ENCODE measurements at regions of chr1 and their contacts with region 1.

Region 1: DNA sequence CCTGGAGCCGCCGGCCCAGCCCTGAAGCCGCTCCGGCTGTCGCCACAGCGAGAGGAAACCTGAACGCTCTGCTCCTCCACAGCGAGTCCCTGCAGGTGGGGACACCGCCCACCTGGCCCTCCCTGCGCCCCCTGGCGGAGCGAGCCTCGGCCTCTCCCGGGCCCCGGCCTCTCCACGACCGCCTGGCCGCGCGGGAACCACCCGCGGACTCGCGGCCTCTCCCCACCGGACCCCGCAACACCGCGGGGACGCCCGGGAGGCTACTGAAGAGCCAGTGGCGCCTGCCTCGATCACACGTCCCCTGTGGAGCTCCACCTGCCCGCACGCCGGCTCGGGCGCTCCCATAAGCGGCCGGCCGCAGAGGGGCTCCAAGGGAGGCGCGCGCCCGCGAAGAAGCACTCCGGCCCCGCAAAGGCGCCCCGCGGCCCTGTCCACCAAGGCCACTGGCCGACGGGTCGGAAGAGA is 109.6 kb downstream of the KCNN3 start:
- DNase-seq: peak; percentile 91
- H3K4me3 ChIP-seq: peak overlapping the region; percentile 35 to 56
- H3K27ac ChIP-seq: no peak overlapping the region
- H3K4me1 ChIP-seq: no peaks in the 10 kb centered on the region; a peak in 1 of 4 replicates
- H3K27me3 ChIP-seq: peaks cover 26% of the 10 kb centered on the region
- CTCF ChIP-seq: peak; percentile 66
- EP300 ChIP-seq: no peak
- RAD21 ChIP-seq: peak; percentile 60

Region 2: GRCh38 chr1:154558575-154559465 is 201.7 kb before region 1 on chr1 and contains the start of gene UBE2Q1:
- CTCF ChIA-PET with region 1: interaction called, 17 read pairs
- POLR2A ChIA-PET with region 1: no interaction called
- DNase-seq: peak; percentile 98
- H3K4me3 ChIP-seq: peak within 1 kb of the TSS; percentile 87 to 94
- H3K27ac ChIP-seq: peak within 1 kb of the TSS; percentile 75 to 96
- H3K4me1 ChIP-seq: peaks cover 7 to 32% of the 10 kb centered on the region in 2 experiments; a peak in 2 of 4 replicates
- H3K27me3 ChIP-seq: no peaks in the 10 kb centered on the region
- CTCF ChIP-seq: no peak
- EP300 ChIP-seq: peak; percentile 36 to 51; a peak in 2 of 4 replicates
- RAD21 ChIP-seq: no peak
- polyA plus RNA-seq, gene UBE2Q1: 12.5 and 15.2 TPM in 2 replicates

Region 3: DNA sequence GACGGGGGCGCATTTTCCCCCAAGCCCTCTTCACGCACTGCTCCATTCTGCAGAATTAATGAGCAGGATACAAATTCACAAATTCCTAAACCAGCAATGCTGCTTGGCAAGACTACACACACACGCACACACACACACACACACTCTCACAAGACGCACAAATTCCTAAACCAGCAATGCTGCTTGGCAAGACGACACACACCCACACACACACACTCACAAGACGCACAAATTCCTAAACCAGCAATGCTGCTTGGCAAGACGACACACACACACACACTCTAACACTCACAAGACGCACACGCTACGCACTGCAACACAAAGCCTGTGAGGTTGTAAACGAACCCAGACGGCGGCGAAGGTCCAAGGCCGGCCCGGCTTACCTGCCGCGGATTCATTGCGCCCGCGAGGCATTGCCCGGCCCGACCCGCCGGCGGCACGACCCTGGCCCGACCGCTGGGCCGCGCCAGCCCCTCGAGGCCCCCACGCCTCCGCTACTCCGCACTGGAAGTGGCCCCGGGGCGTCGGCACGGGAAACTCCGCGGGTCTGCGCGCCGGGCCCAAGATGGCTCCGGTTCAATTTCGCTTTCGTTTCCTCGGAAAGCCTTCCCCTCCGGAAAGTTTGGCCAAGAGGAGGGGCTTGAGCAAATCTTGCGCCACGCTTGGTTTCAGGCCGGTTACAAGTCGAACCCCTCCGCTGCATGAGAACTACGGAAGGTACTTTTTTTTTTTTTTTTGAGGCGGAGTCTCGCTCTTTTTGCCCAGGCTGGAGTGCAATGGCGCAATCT is 152.7 kb before region 1 on chr1 and contains the start of gene ADAR:
- CTCF ChIA-PET with region 1: no interaction called
- POLR2A ChIA-PET with region 1: no interaction called
- DNase-seq: peak; percentile 87
- H3K4me3 ChIP-seq: peak within 1 kb of the TSS; percentile 61 to 83
- H3K27ac ChIP-seq: peak within 1 kb of the TSS; percentile 82 to 94
- H3K4me1 ChIP-seq: peaks cover 11 to 14% of the 10 kb centered on the region in 2 experiments
- H3K27me3 ChIP-seq: no peaks in the 10 kb centered on the region
- CTCF ChIP-seq: 0 out of 2 replicates have a peak, but pooled peaks have one; percentile 13
- EP300 ChIP-seq: 0 out of 4 replicates have a peak, but pooled peaks of 1 of the 2 experiments have one; percentile 5
- RAD21 ChIP-seq: no peak
- polyA plus RNA-seq, gene ADAR: 61.1 and 87.9 TPM in 2 replicates

Region 4: DNA sequence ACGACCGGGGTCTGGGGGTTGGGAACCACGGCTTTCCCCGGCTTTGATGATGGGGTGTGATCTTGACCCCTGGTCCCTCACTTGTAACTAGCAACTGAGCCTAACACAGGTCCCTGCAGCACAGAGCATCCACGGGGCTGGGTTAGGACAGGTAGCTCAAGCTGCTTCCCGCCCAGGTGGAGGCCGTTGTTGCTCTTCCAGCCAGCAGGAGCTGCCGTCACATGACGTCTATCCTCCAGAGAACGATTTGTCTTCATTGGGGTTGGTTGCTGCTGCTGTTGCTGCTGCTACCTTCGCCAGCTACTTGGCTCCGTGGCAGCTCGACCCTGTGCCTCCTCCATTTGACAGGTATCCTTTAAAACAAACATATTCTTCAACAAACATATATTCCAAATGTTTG is 78.2 kb before region 1 on chr1:
- CTCF ChIA-PET with region 1: interaction called, 10 read pairs
- POLR2A ChIA-PET with region 1: no interaction called
- DNase-seq: no peak
- H3K4me3 ChIP-seq: no peak overlapping the region
- H3K27ac ChIP-seq: no peak overlapping the region
- H3K4me1 ChIP-seq: no peaks in the 10 kb centered on the region; a peak in 1 of 4 replicates
- H3K27me3 ChIP-seq: peaks cover 12% of the 10 kb centered on the region
- CTCF ChIP-seq: no peak
- EP300 ChIP-seq: no peak
- RAD21 ChIP-seq: no peak

Region 5: DNA sequence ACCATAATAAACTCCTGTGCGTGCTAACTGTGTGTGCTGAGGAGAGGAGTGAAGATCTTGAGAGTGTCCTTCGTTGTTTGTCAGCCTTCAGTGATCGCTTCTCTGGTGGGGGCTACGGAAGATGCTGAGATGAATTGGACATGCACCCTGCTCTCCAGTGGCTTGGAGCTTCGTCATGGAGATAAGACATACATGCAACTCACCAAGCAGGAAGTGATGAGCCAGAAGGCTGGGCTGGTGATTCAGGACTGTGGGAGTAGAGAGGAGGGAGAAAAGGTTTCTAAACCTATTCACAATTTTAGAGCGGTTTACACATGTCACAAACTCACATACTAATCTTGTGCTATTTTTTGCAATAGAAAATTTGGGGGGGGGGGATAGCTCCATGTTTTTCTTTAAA is 23.7 kb before region 1 on chr1:
- CTCF ChIA-PET with region 1: interaction called, 10 read pairs
- POLR2A ChIA-PET with region 1: no interaction called
- DNase-seq: no peak
- H3K4me3 ChIP-seq: no peak overlapping the region
- H3K27ac ChIP-seq: no peak overlapping the region
- H3K4me1 ChIP-seq: peaks cover 0 to 9% of the 10 kb centered on the region in 2 experiments; a peak in 2 of 4 replicates
- H3K27me3 ChIP-seq: no peaks in the 10 kb centered on the region
- CTCF ChIP-seq: no peak
- EP300 ChIP-seq: no peak
- RAD21 ChIP-seq: no peak

Region 6: DNA sequence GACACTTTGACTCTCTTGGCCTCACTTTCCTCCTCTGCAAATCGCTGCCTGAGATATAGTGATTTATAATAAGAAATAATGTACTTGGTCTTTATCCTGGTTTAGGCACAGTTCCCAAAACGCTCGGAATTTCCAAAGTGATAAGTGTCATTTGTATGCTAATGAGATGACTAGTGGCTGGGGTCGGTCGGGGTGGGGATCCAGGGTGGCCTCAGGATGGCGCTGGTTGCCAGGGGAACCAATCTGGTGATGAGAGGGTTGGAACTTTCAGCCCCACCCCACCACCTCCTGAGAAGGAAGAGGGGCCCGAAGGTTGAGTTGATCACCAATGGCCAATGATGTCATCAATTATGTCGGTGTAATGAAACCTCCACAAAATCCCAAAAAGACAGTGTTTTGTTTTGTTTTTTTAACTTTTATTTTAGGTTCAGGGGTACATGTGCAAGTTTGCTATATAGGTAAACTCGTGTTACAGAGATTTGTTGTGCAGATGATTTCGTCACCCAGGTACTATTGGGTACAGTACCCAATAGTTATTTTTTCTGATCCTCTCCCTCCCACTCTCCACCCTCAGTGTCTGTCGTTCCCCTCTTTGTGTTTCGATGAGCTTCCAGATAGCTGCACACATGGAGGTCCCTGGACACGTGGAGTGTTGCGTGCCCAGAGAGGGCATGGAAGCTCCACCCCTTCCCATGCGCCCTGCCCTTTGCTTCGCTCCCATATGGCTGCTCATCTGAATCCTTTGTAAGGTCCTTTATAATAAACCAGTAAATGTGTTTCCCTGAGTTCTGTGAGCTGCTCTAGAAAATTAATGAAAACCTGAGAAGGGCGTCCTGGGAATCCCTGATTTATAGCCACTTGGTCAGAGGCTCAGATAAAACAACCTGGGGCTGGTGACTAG is 12.4 kb after region 1 on chr1:
- CTCF ChIA-PET with region 1: interaction called, 32 read pairs
- POLR2A ChIA-PET with region 1: no interaction called
- DNase-seq: no peak
- H3K4me3 ChIP-seq: no peak overlapping the region
- H3K27ac ChIP-seq: no peak overlapping the region
- H3K4me1 ChIP-seq: peaks cover 0 to 23% of the 10 kb centered on the region in 2 experiments; a peak in 1 of 4 replicates
- H3K27me3 ChIP-seq: peaks cover 4% of the 10 kb centered on the region; the same call in 1 of the 2 replicates
- CTCF ChIP-seq: no peak
- EP300 ChIP-seq: no peak
- RAD21 ChIP-seq: no peak

Region 7: GRCh38 chr1:154794608-154795007 is 34.1 kb after region 1 on chr1:
- CTCF ChIA-PET with region 1: no interaction called
- POLR2A ChIA-PET with region 1: no interaction called
- DNase-seq: no peak
- H3K4me3 ChIP-seq: no peak overlapping the region
- H3K27ac ChIP-seq: no peak overlapping the region
- H3K4me1 ChIP-seq: no peaks in the 10 kb centered on the region; a peak in 2 of 4 replicates
- H3K27me3 ChIP-seq: peaks cover 24% of the 10 kb centered on the region
- CTCF ChIP-seq: no peak
- EP300 ChIP-seq: no peak
- RAD21 ChIP-seq: no peak

Region 8: GRCh38 chr1:154833841-154834240 is 73.3 kb after region 1 on chr1:
- CTCF ChIA-PET with region 1: interaction called, 10 read pairs
- POLR2A ChIA-PET with region 1: no interaction called
- DNase-seq: no peak
- H3K4me3 ChIP-seq: no peak overlapping the region
- H3K27ac ChIP-seq: no peak overlapping the region
- H3K4me1 ChIP-seq: peaks cover 0 to 43% of the 10 kb centered on the region in 2 experiments; a peak in 1 of 4 replicates
- H3K27me3 ChIP-seq: no peaks in the 10 kb centered on the region; the same call in 1 of the 2 replicates
- CTCF ChIP-seq: no peak
- EP300 ChIP-seq: no peak
- RAD21 ChIP-seq: no peak

Region 9: GRCh38 chr1:154931940-154932487 is 171.5 kb after region 1 on chr1:
- CTCF ChIA-PET with region 1: no interaction called
- POLR2A ChIA-PET with region 1: no interaction called
- DNase-seq: no peak
- H3K4me3 ChIP-seq: no peak overlapping the region
- H3K27ac ChIP-seq: no peak overlapping the region
- H3K4me1 ChIP-seq: peaks cover 5 to 6% of the 10 kb centered on the region in 2 experiments; a peak in 2 of 4 replicates
- H3K27me3 ChIP-seq: no peaks in the 10 kb centered on the region
- CTCF ChIP-seq: no peak
- EP300 ChIP-seq: no peak
- RAD21 ChIP-seq: no peak

Measured in SK-N-SH (cell line).